CD4-positive, alpha-beta T cell (primary cell): ENCODE measurements at regions of chr1 and their contacts with region 1.

Region 1: DNA sequence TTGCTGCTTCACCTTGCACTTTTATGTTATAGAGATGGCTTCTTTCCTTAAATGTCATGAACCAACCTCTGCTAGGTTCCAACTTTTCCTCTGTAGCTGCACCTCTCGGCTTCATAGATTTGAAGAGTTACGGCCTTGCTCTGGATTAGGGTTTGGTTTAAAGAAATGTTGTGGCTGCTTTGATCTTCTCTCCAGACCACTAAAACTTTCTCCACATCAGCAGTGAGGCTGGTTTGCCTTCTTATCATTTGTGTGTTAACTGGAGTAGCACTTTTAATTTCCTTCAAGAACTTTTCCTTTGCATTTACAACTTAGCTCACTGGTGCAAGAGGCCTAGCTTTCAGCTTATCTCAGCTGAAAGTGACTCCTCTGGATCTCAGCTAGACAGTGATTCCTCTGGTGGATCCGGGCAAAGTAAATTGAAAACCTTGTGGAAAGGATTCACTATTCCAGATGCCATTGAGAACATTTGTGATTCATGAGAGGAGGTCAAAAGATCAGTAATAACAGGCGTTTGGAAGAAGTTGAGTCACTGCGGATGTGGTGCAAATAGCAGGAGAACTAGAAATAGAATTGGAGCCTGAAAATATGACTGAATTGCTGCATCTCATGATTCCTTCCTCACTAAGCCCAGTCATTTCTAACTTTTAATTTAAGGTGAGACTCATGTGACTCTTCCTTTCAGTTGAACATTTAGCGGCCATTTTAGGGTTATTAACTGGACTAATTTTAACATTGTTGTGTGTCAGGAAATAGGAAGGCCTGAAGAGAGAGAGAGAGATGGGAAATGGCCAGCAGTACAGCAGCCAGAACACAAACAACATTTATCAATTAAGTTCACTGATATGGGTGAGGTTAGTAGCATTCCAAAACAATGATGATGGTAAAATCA is 16.2 kb upstream of the RGS1 start:
- DNase-seq: peak in 1 of 14 experiments; percentile 57
- ATAC-seq: peak; percentile 17
- H3K4me3 ChIP-seq: no peak overlapping the region
- H3K4me3 Mint-ChIP-seq: no peak overlapping the region
- H3K27ac ChIP-seq: no peak overlapping the region
- H3K27ac Mint-ChIP-seq: no peak overlapping the region
- H3K4me1 ChIP-seq: no peaks in the 10 kb centered on the region
- H3K4me1 Mint-ChIP-seq: peaks cover 10% of the 10 kb centered on the region
- H3K27me3 ChIP-seq: no peaks in the 10 kb centered on the region
- H3K27me3 Mint-ChIP-seq: no peaks in the 10 kb centered on the region
- CTCF ChIP-seq: no peak

Region 2: DNA sequence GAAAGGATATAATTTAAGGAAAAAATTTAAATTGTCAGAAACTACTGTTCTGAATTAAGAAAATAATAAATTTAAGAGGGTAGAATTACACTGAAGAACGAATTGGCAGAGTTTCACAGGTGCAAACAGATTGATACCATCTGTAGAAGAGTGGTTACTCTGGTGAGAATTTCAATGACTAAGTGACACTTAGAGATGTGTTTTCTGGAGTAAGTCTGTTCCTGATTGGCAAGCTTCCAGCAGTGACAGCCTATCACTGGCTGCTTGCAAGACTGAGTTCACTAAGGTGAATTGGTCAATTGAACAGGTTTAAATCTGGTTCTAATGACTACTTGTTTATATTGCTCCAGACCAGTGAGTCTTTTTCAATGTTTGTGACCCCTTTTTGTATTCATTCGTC is 1239.3 kb before region 1 on chr1:
- CTCF ChIA-PET with region 1: no interaction called
- POLR2A ChIA-PET with region 1: no interaction called
- intact Hi-C with region 1: no loop called
- DNase-seq: no peak
- ATAC-seq: no peak
- H3K4me3 ChIP-seq: no peak overlapping the region
- H3K4me3 Mint-ChIP-seq: no peak overlapping the region
- H3K27ac ChIP-seq: no peak overlapping the region
- H3K27ac Mint-ChIP-seq: no peak overlapping the region
- H3K4me1 ChIP-seq: no peaks in the 10 kb centered on the region
- H3K4me1 Mint-ChIP-seq: no peaks in the 10 kb centered on the region
- H3K27me3 ChIP-seq: no peaks in the 10 kb centered on the region
- H3K27me3 Mint-ChIP-seq: no peaks in the 10 kb centered on the region
- CTCF ChIP-seq: no peak

Region 3: GRCh38 chr1:192530254-192530653 is 29.1 kb before region 1 on chr1:
- CTCF ChIA-PET with region 1: no interaction called
- POLR2A ChIA-PET with region 1: no interaction called
- intact Hi-C with region 1: loop called in 1 of 2 experiments (anchors 5 kb)
- DNase-seq: peak in 2 of 14 experiments; percentile 35 to 37
- ATAC-seq: no peak
- H3K4me3 ChIP-seq: no peak overlapping the region
- H3K4me3 Mint-ChIP-seq: no peak overlapping the region
- H3K27ac ChIP-seq: no peak overlapping the region
- H3K27ac Mint-ChIP-seq: no peak overlapping the region
- H3K4me1 ChIP-seq: peaks cover 2% of the 10 kb centered on the region
- H3K4me1 Mint-ChIP-seq: peaks cover 20% of the 10 kb centered on the region
- H3K27me3 ChIP-seq: no peaks in the 10 kb centered on the region
- H3K27me3 Mint-ChIP-seq: no peaks in the 10 kb centered on the region
- CTCF ChIP-seq: no peak

Region 4: GRCh38 chr1:192846950-192847349 is 287.6 kb after region 1 on chr1:
- CTCF ChIA-PET with region 1: no interaction called
- POLR2A ChIA-PET with region 1: no interaction called
- intact Hi-C with region 1: no loop called
- DNase-seq: no peak
- ATAC-seq: no peak
- H3K4me3 ChIP-seq: no peak overlapping the region
- H3K4me3 Mint-ChIP-seq: no peak overlapping the region
- H3K27ac ChIP-seq: no peak overlapping the region
- H3K27ac Mint-ChIP-seq: no peak overlapping the region
- H3K4me1 ChIP-seq: no peaks in the 10 kb centered on the region
- H3K4me1 Mint-ChIP-seq: no peaks in the 10 kb centered on the region
- H3K27me3 ChIP-seq: no peaks in the 10 kb centered on the region
- H3K27me3 Mint-ChIP-seq: no peaks in the 10 kb centered on the region
- CTCF ChIP-seq: no peak